Psoas muscle (tissue), 8 donors: ENCODE measurements at regions of chr18 and their contacts with region 1.

Region 1: DNA sequence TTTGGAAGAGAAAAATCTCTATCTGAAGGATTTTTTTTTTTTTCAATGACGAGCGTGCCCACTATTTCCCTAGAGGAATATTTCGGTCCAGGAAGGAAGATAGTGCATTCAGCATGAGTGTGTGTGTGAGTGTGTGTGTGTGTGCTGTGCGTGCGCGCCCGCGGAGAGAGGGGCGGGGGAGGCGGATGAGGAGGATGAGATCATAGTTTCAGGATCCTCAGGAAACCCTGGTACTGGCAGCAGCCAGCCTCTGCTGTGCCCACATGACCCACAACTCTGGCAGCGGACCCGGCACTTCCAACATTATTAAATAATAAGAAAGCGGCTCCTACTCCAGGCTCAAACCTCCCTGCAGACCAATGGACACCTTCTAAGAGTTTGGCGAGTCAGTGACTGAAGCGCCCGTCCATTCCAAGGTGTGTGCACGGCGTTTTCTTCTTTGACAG is 217.0 kb upstream of the DTNA start:
- DNase-seq: peak; percentile 75 to 90
- ATAC-seq: peak; percentile 91 to 93 (median 92)
- H3K4me3 ChIP-seq: peak overlapping the region; percentile 85
- H3K27ac ChIP-seq: peak overlapping the region; percentile 92
- H3K4me1 ChIP-seq: peaks cover 22% of the 10 kb centered on the region
- H3K27me3 ChIP-seq: no peaks in the 10 kb centered on the region
- CTCF ChIP-seq: no peak

Region 2: DNA sequence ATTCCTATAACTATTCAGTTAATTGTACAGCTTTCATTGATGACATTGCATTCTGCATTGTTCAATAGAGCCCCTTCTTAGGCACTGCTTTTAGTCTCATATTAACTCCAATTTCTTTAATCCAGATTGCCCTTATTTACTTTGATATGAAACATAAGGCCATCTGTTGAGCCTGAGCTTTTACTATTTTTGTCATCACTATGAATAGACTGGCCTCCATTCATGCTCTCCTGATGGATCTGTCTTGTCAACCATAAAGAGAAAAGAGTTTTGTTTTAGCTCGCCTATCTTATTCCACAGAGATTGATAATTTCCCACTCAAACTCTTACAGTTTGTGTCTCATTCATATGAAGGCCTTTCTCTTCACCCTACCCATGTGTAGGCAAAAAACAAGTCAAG is 57.8 kb after region 1 on chr18:
- intact Hi-C with region 1: no loop called
- DNase-seq: no peak
- ATAC-seq: peak; percentile 59 to 88 (median 77)
- H3K4me3 ChIP-seq: no peak overlapping the region
- H3K27ac ChIP-seq: peak overlapping the region; percentile 56
- H3K4me1 ChIP-seq: peaks cover 29% of the 10 kb centered on the region
- H3K27me3 ChIP-seq: no peaks in the 10 kb centered on the region
- CTCF ChIP-seq: no peak

Region 3: GRCh38 chr18:34592961-34593382 is 99.8 kb after region 1 on chr18:
- intact Hi-C with region 1: loop called in 1 of 2 experiments (anchors 5 kb)
- DNase-seq: peak; percentile 72 to 85
- ATAC-seq: peak; percentile 85 to 95 (median 88)
- H3K4me3 ChIP-seq: peak overlapping the region; percentile 59
- H3K27ac ChIP-seq: peak overlapping the region; percentile 83
- H3K4me1 ChIP-seq: peaks cover 25% of the 10 kb centered on the region
- H3K27me3 ChIP-seq: no peaks in the 10 kb centered on the region
- CTCF ChIP-seq: no peak

Region 4: DNA sequence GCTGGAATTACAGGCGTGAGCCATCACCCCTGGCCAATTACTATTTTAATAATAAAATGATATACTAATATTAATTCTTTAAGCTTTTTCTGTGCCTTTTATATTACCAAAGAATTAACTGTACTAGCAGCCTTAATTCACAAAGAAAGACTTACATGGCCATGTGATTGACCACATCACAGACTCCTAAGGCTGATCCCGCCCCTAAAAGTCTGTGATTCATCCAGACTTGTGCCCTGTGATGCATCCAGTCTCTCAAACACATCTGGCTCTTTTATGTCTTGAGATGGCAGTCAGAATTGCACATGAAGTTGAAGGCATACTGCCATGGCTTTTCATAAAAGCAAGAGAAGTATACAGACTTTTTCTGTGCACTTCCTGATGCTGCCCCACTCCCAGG is 308.7 kb after region 1 on chr18:
- intact Hi-C with region 1: loop called in 1 of 2 experiments (anchors 5 kb)
- DNase-seq: no peak
- ATAC-seq: peak; percentile 40 to 76 (median 67)
- H3K4me3 ChIP-seq: no peak overlapping the region
- H3K27ac ChIP-seq: no peak overlapping the region
- H3K4me1 ChIP-seq: peaks cover 29% of the 10 kb centered on the region
- H3K27me3 ChIP-seq: no peaks in the 10 kb centered on the region
- CTCF ChIP-seq: no peak